ENCODE measurements at regions of chr18 and their contacts with region 1.

Region 1: GRCh38 chr18:50432915-50433314 is 58.1 kb downstream of the SKA1 start:
- DNase-seq: no peak
- H3K4me3 ChIP-seq: no peak overlapping the region
- H3K4me3 Mint-ChIP-seq: no peak overlapping the region
- H3K27ac ChIP-seq: no peak overlapping the region
- H3K27ac Mint-ChIP-seq: no peak overlapping the region
- H3K4me1 ChIP-seq: no peaks in the 10 kb centered on the region
- H3K4me1 Mint-ChIP-seq: peaks cover 2% of the 10 kb centered on the region
- H3K27me3 ChIP-seq: no peaks in the 10 kb centered on the region
- H3K27me3 Mint-ChIP-seq: peaks cover 5 to 9% (median 7%) of the 10 kb centered on the region in 3 donors
- CTCF ChIP-seq: no peak

Region 2: GRCh38 chr18:50009773-50010335 is 423.1 kb before region 1 on chr18:
- intact Hi-C with region 1: loop called in 1 of 2 experiments (anchors 10 kb)
- DNase-seq: peak; percentile 5 to 33 (median 12)
- H3K4me3 ChIP-seq: no peak overlapping the region
- H3K4me3 Mint-ChIP-seq: no peak overlapping the region
- H3K27ac ChIP-seq: no peak overlapping the region
- H3K27ac Mint-ChIP-seq: no peak overlapping the region
- H3K4me1 ChIP-seq: no peaks in the 10 kb centered on the region
- H3K4me1 Mint-ChIP-seq: no peaks in the 10 kb centered on the region
- H3K27me3 ChIP-seq: no peaks in the 10 kb centered on the region
- H3K27me3 Mint-ChIP-seq: peaks cover under 1 to 2% (median under 1%) of the 10 kb centered on the region in 3 donors
- CTCF ChIP-seq: peak; percentile 32